Activated CD4-positive, alpha-beta T cell treated with anti-CD3 and anti-CD28 coated beads, Interleukin-2, amount 10 ng/mL, durations not matched to agents 7 days and 5 days (primary cell): ENCODE measurements at regions of chr15 and their contacts with region 1.

Region 1: DNA sequence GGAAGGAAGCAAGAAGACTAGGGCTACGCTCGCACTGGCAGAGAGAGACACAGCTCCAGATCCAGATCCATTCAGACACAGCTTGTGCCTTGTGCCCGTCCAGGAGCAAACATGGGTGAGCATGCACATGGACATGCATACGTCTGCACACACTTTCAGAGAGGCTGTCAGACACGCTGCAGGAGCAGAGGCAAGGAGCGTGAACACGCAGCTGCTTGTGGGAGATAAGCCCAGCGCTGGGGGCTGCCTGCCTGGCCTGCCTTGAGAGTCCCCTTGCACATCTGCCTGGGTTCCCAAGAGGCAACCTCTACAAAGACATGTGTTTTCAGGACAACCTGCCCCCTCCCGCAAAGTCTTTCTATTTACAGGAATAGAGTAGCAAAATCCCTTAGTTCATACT is 13.6 kb upstream of the BAHD1 start:
- DNase-seq: no peak
- H3K4me3 Mint-ChIP-seq: no peak overlapping the region
- H3K27ac Mint-ChIP-seq: no peak overlapping the region
- H3K4me1 Mint-ChIP-seq: no peaks in the 10 kb centered on the region
- H3K27me3 Mint-ChIP-seq: no peaks in the 10 kb centered on the region

Region 2: GRCh38 chr15:40344631-40345120 is 82.5 kb before region 1 on chr15:
- CTCF ChIA-PET with region 1: interaction called, 33 read pairs
- POLR2A ChIA-PET with region 1: no interaction called
- DNase-seq: peak; percentile 83
- H3K4me3 Mint-ChIP-seq: no peak overlapping the region
- H3K27ac Mint-ChIP-seq: no peak overlapping the region
- H3K4me1 Mint-ChIP-seq: no peaks in the 10 kb centered on the region
- H3K27me3 Mint-ChIP-seq: no peaks in the 10 kb centered on the region